Common myeloid progenitor, CD34-positive (primary cell): ENCODE measurements at regions of chrX and their contacts with region 1.

Region 1: GRCh38 chrX:49137492-49137891 is 14.0 kb upstream of the GPKOW start:
- DNase-seq: no peak
- H3K4me3 ChIP-seq: no peak overlapping the region
- H3K27ac ChIP-seq: no peak overlapping the region
- H3K4me1 ChIP-seq: peaks cover 0 to under 1% (median 0%) of the 10 kb centered on the region in 4 experiments
- H3K27me3 ChIP-seq: no peaks in the 10 kb centered on the region

Region 2: DNA sequence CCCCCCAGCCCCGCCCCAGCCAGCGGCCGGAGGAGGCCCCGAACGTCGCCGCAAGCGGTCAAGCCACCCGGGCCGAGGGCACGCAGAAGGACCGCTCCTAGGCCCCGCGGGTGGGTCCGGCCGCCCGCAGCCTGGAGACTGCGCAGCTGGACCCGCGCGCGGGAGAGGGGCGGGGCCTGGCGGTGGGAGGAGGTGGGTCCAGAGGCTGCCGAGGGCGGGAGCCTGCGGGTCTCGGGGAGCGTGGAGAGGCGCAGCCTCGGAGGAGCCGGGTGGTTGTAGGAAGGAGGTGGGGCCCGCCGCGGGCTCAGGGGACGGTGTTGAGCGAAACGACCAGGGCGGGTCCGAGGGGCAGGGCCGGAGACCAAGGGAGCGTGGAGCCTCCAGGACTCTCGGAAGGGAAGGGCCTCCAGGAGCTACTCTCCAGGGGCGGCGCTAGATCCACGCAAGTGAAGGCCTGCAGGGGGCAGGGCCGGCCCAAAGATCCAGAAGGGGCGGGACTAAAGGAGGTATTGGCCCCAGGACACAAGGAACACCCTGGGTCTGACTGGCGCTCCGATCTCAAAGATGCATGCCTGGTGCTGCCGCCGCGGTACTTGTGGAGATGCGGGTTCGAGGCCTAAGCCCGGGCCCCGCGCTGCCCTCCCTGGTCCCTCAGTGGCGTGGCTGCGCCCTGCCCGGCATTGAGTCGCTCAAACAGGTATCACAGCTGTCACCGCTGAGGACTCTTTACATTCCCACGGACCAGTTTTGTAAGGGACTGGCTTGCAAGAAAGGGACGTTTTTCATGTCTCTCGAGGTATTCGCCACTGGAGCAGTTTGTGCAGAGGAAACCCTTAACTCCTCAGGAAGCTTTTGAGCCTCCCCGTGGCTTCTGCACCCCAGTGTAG is 245.8 kb before region 1 on chrX:
- CTCF ChIA-PET with region 1: no interaction called
- POLR2A ChIA-PET with region 1: no interaction called
- DNase-seq: peak; percentile 80 to 90 (median 87)
- H3K4me3 ChIP-seq: peak overlapping the region; percentile 20 to 70 (median 54)
- H3K27ac ChIP-seq: no peak overlapping the region
- H3K4me1 ChIP-seq: peaks cover 0 to 12% (median 8%) of the 10 kb centered on the region in 4 experiments
- H3K27me3 ChIP-seq: no peaks in the 10 kb centered on the region

Region 3: DNA sequence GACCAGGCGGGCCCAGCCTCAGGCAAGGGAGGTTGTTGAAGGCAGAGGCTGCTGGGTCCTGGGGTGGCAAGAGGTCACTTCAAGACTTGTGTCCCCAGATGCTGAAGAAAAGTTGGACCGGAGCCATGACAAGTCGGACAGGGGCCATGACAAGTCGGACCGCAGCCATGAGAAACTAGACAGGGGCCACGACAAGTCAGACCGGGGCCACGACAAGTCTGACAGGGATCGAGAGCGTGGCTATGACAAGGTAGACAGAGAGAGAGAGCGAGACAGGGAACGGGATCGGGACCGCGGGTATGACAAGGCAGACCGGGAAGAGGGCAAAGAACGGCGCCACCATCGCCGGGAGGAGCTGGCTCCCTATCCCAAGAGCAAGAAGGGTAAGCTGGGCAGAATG is 235.4 kb before region 1 on chrX:
- CTCF ChIA-PET with region 1: no interaction called
- POLR2A ChIA-PET with region 1: no interaction called
- DNase-seq: no peak
- H3K4me3 ChIP-seq: no peak overlapping the region
- H3K27ac ChIP-seq: no peak overlapping the region
- H3K4me1 ChIP-seq: peaks cover 0 to 12% (median 6%) of the 10 kb centered on the region in 4 experiments
- H3K27me3 ChIP-seq: no peaks in the 10 kb centered on the region

Region 4: DNA sequence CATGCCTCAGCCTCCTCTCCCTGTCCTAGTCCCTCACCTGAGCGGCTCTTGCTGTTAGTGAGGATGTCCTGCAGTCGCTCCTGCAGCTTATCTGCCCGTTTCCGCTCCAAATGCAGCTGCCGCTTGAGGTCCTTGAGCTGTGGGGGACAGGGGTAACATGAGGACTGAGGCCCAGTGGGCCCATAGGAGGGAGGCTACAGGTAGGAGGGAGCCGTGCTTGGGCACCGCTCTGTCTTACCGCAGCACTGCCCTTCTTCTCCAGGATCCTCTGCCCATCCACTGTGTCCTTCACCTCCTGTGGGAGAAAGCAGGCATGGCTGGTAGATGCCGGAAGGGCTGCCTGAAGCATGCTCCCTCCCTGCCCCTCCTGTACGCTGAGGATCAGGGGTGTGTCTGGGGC is 156.3 kb before region 1 on chrX:
- CTCF ChIA-PET with region 1: no interaction called
- POLR2A ChIA-PET with region 1: no interaction called
- DNase-seq: no peak
- H3K4me3 ChIP-seq: no peak overlapping the region
- H3K27ac ChIP-seq: no peak overlapping the region
- H3K4me1 ChIP-seq: peaks cover 0 to 9% (median 3%) of the 10 kb centered on the region in 4 experiments
- H3K27me3 ChIP-seq: no peaks in the 10 kb centered on the region

Region 5: DNA sequence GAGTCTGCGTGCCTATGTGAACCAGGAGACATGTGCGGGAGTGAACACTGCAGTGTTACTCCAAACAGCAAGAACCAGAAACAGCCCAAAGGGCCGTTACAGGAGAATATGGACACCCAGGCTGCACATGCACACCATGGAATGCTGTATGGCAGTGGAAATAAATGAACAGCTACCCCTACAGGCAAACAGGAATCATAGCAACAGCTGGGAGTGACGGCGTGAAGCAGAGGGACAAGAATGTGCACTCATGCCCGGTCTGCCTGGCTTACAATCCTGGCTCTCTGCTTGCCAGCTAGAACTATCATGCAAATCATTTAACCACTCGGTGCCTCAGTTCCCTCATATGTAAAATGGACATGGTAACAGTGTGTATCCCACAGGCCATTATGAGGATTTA is 30.6 kb before region 1 on chrX:
- CTCF ChIA-PET with region 1: no interaction called
- POLR2A ChIA-PET with region 1: no interaction called
- DNase-seq: peak in 2 of 3 donors; percentile 56 to 58
- H3K4me3 ChIP-seq: no peak overlapping the region
- H3K27ac ChIP-seq: no peak overlapping the region
- H3K4me1 ChIP-seq: peaks cover 0 to under 1% (median 0%) of the 10 kb centered on the region in 4 experiments
- H3K27me3 ChIP-seq: no peaks in the 10 kb centered on the region

Region 6: GRCh38 chrX:49155900-49156837 is 18.7 kb after region 1 on chrX:
- CTCF ChIA-PET with region 1: interaction called, 15 read pairs
- POLR2A ChIA-PET with region 1: interaction called, 3 read pairs
- DNase-seq: peak; percentile 83 to 91 (median 87)
- H3K4me3 ChIP-seq: peak overlapping the region; percentile 14 to 79 (median 55)
- H3K27ac ChIP-seq: peak overlapping the region; percentile 64 to 85
- H3K4me1 ChIP-seq: peaks cover 2 to 17% (median 12%) of the 10 kb centered on the region in 4 experiments
- H3K27me3 ChIP-seq: no peaks in the 10 kb centered on the region

Region 7: GRCh38 chrX:49177338-49177833 is 39.9 kb after region 1 on chrX:
- CTCF ChIA-PET with region 1: interaction called, 15 read pairs
- POLR2A ChIA-PET with region 1: no interaction called
- DNase-seq: peak; percentile 54 to 73 (median 72)
- H3K4me3 ChIP-seq: no peak overlapping the region
- H3K27ac ChIP-seq: no peak overlapping the region
- H3K4me1 ChIP-seq: peaks cover 3 to 37% (median 22%) of the 10 kb centered on the region in 4 experiments
- H3K27me3 ChIP-seq: no peaks in the 10 kb centered on the region